ENCODE measurements at regions of chr11 and their contacts with region 1.

Region 1: GRCh38 chr11:96841792-96842191 is 452.0 kb downstream of the JRKL start:
- DNase-seq: no peak
- H3K4me3 ChIP-seq: no peak overlapping the region
- H3K27ac ChIP-seq: no peak overlapping the region
- H3K4me1 ChIP-seq: no peaks in the 10 kb centered on the region
- H3K27me3 ChIP-seq: no peaks in the 10 kb centered on the region
- CTCF ChIP-seq: no peak

Region 2: DNA sequence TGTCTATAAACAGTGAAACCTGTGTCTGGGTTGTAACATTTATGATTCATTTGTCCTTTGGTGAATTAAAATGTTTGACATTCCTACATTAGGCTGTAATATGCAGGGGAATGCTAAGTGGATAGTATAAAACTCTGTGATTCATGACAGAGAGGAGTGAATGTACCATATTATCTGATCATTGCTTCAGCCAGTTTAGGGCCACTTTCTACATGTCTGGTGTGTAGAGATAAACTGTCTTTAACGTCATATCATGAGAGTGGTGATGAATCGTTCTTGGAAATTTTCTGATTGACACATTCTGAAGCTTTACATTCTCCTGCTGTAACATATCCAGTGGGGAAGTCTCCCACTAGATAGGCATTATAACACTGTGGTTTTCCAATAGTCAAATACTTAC is 24.3 kb before region 1 on chr11:
- intact Hi-C with region 1: loop called (anchors 2 kb)
- DNase-seq: no peak
- H3K4me3 ChIP-seq: no peak overlapping the region
- H3K27ac ChIP-seq: no peak overlapping the region
- H3K4me1 ChIP-seq: no peaks in the 10 kb centered on the region
- H3K27me3 ChIP-seq: no peaks in the 10 kb centered on the region
- CTCF ChIP-seq: no peak

Region 3: GRCh38 chr11:96925862-96926261 is 84.1 kb after region 1 on chr11:
- intact Hi-C with region 1: no loop called
- DNase-seq: no peak
- H3K4me3 ChIP-seq: no peak overlapping the region
- H3K27ac ChIP-seq: no peak overlapping the region
- H3K4me1 ChIP-seq: no peaks in the 10 kb centered on the region
- H3K27me3 ChIP-seq: no peaks in the 10 kb centered on the region
- CTCF ChIP-seq: no peak

Measured in tibial artery (tissue), 4 donors.